ENCODE measurements at regions of chr15 and their contacts with region 1.

Region 1: DNA sequence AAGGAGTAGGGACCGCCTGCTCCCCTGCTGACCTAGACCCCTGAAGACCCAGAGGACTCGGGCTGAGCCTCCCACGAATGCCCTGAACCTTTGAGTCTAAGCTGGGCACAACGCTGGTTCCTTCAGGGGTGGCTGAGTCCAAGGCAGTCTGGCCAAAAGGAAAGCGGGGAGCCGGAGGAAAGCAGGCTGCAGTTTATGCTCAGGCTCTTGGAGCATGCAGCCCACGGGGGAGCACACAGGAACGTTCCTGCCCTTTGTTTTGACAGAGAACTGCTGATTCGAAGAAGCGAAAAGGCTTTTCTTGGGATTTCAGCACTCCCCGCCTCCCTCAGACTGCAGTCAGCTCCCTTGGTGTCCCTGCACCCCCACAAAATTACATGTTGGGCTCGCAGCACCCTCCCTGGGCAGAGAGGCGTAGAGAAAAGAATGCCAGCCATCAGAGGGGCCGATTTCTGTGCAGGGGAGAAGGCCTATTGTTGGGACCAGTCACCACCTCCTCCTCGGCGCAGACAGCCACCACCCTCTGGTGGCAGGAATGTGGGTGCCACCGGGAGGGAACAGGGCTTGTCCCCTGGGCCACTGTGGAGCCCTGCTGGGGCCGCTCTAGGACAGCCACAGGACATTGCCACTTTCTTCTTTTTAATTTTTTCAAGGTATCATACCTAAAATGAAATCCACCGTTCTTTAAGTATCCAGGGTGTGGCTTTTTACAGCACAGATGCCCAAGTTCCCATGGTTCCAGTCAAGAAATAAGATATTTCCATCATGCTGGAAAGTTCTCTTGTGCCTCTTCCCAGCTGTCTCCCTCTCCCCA is 72.2 kb downstream of the SMAD6 start:
- DNase-seq: peak; percentile 90 to 93
- H3K4me3 ChIP-seq: no peak overlapping the region
- H3K4me3 Mint-ChIP-seq: peak overlapping the region; percentile 10
- H3K27ac Mint-ChIP-seq: peak overlapping the region; percentile 95
- H3K4me1 ChIP-seq: peaks cover 62% of the 10 kb centered on the region
- H3K4me1 Mint-ChIP-seq: peaks cover 33% of the 10 kb centered on the region
- H3K27me3 ChIP-seq: no peaks in the 10 kb centered on the region
- H3K27me3 Mint-ChIP-seq: no peaks in the 10 kb centered on the region
- CTCF ChIP-seq: peak; percentile 96

Region 2: DNA sequence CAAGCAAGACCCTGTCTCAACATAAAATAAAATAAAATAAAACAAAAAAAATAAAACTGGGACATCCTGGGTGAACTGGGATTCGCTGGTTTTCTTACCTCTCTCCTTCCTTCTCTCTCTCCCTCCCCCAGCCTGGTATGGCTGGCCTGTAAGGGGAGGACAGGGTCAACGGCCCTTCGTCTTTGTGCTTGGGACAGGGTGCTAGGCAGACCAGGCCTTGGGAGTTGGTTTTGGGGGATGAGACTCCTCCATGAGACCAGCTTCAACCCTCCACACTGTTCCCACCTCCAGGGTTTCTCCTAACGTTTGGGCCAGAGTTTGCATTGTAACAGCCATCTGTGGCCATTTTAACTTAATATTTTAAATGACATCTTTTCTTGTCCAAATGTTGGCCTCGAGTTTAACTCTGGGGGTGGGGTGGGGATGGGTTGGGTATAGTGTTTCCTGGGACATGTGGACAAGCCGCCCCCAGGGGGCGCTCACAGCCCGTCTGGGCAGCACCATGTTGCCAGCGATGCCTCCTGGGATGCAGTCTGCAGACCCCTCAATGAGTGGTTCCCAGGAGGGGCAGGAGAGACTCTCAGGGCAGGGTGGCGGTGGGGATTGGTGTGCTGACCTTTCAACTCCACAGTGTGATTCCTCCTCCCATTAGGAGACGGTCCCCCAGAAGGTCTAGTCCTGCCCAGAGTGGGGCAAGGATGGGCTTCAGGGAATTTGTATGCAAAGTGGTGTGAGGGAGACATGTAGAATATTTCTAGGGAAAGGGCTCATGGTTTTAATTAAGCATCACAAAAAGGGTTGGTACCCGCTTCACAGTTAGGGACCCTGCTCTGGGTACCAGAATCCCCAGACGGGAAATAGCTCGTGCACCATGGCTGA is 170.7 kb before region 1 on chr15:
- CTCF ChIA-PET with region 1: interaction called, 9 read pairs
- POLR2A ChIA-PET with region 1: no interaction called
- intact Hi-C with region 1: loop called (anchors 1 kb)
- DNase-seq: peak in 1 of 2 experiments; percentile 72
- H3K4me3 ChIP-seq: no peak overlapping the region
- H3K4me3 Mint-ChIP-seq: no peak overlapping the region
- H3K27ac Mint-ChIP-seq: no peak overlapping the region
- H3K4me1 ChIP-seq: no peaks in the 10 kb centered on the region
- H3K4me1 Mint-ChIP-seq: no peaks in the 10 kb centered on the region
- H3K27me3 ChIP-seq: no peaks in the 10 kb centered on the region
- H3K27me3 Mint-ChIP-seq: no peaks in the 10 kb centered on the region
- CTCF ChIP-seq: peak; percentile 83 to 84

Region 3: GRCh38 chr15:66619151-66619903 is 154.9 kb before region 1 on chr15:
- CTCF ChIA-PET with region 1: interaction called, 7 read pairs
- POLR2A ChIA-PET with region 1: no interaction called
- intact Hi-C with region 1: loop called (anchors 1 kb)
- DNase-seq: peak; percentile 80 to 84
- H3K4me3 ChIP-seq: no peak overlapping the region
- H3K4me3 Mint-ChIP-seq: no peak overlapping the region
- H3K27ac Mint-ChIP-seq: no peak overlapping the region
- H3K4me1 ChIP-seq: peaks cover 20% of the 10 kb centered on the region
- H3K4me1 Mint-ChIP-seq: no peaks in the 10 kb centered on the region
- H3K27me3 ChIP-seq: no peaks in the 10 kb centered on the region
- H3K27me3 Mint-ChIP-seq: no peaks in the 10 kb centered on the region
- CTCF ChIP-seq: peak; percentile 76 to 90

Region 4: GRCh38 chr15:66700802-66701421 is 73.3 kb before region 1 on chr15:
- CTCF ChIA-PET with region 1: interaction called, 4 read pairs
- POLR2A ChIA-PET with region 1: interaction called, 6 read pairs
- intact Hi-C with region 1: loop called (anchors 1 kb)
- DNase-seq: peak; percentile 96 to 98
- H3K4me3 ChIP-seq: peak overlapping the region; percentile 74
- H3K4me3 Mint-ChIP-seq: peak overlapping the region; percentile 91
- H3K27ac Mint-ChIP-seq: no peak overlapping the region
- H3K4me1 ChIP-seq: peaks cover 13% of the 10 kb centered on the region
- H3K4me1 Mint-ChIP-seq: peaks cover 24% of the 10 kb centered on the region
- H3K27me3 ChIP-seq: no peaks in the 10 kb centered on the region
- H3K27me3 Mint-ChIP-seq: no peaks in the 10 kb centered on the region
- CTCF ChIP-seq: no peak

Region 5: DNA sequence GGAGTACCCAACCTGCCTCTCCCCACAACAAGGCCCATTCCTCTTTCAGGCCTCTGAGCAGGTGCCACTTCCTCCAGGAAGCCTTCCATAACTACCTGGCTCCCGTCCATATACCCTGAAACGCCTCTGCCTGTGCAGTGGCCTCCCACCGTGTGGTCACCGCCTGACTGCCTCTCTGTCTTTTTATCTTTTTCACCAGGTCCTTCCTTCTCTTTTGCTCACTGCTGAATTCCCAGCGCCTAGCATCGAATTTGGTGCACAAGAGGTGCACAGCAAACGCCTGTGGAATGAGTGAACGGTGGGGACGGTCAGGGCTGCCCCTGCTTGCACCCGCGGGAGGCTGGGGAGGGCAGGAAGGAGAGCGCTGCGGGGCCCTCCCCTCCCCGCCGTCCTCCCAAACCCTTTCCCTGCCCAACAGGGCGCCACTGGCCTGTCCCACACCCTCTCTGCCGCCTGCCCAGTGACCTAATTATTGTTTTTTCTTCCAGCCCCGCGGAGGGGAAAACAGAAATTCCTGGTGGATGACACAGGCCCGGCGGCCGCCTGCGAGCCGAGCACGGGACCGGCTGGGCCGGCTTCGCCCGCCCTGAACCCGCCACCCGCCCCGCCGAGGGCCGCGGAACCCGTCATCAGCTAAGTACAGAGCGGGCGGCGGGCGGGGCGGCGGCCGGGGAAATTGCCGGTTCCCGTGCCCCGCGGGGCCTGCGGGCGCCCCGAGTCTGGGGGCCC is 67.9 kb after region 1 on chr15:
- CTCF ChIA-PET with region 1: no interaction called
- POLR2A ChIA-PET with region 1: no interaction called
- intact Hi-C with region 1: loop called (anchors 2 kb)
- DNase-seq: peak; percentile 81 to 88
- H3K4me3 ChIP-seq: peak overlapping the region; percentile 37
- H3K4me3 Mint-ChIP-seq: peak overlapping the region; percentile 89
- H3K27ac Mint-ChIP-seq: peak overlapping the region; percentile 96
- H3K4me1 ChIP-seq: peaks cover 26% of the 10 kb centered on the region
- H3K4me1 Mint-ChIP-seq: peaks cover 12% of the 10 kb centered on the region
- H3K27me3 ChIP-seq: no peaks in the 10 kb centered on the region
- H3K27me3 Mint-ChIP-seq: no peaks in the 10 kb centered on the region
- CTCF ChIP-seq: no peak

Region 6: GRCh38 chr15:66851226-66852071 is 77.2 kb after region 1 on chr15:
- CTCF ChIA-PET with region 1: interaction called, 15 read pairs
- POLR2A ChIA-PET with region 1: interaction called, 3 read pairs
- intact Hi-C with region 1: no loop called
- DNase-seq: peak; percentile 86 to 87
- H3K4me3 ChIP-seq: no peak overlapping the region
- H3K4me3 Mint-ChIP-seq: peak overlapping the region; percentile 47
- H3K27ac Mint-ChIP-seq: peak overlapping the region; percentile 50
- H3K4me1 ChIP-seq: peaks cover 23% of the 10 kb centered on the region
- H3K4me1 Mint-ChIP-seq: peaks cover 19% of the 10 kb centered on the region
- H3K27me3 ChIP-seq: no peaks in the 10 kb centered on the region
- H3K27me3 Mint-ChIP-seq: no peaks in the 10 kb centered on the region
- CTCF ChIP-seq: peak; percentile 85 to 93

Measured in Caco-2 (cell line).